ENCODE measurements at regions of chr5 and their contacts with region 1.

Region 1: GRCh38 chr5:8329773-8330172 is 460.8 kb downstream of the MTRR start:
- DNase-seq: no peak
- ATAC-seq: no peak
- H3K4me3 ChIP-seq: no peak overlapping the region
- H3K27ac ChIP-seq: no peak overlapping the region
- H3K4me1 ChIP-seq: no peaks in the 10 kb centered on the region
- H3K27me3 ChIP-seq: no peaks in the 10 kb centered on the region
- CTCF ChIP-seq: no peak

Region 2: DNA sequence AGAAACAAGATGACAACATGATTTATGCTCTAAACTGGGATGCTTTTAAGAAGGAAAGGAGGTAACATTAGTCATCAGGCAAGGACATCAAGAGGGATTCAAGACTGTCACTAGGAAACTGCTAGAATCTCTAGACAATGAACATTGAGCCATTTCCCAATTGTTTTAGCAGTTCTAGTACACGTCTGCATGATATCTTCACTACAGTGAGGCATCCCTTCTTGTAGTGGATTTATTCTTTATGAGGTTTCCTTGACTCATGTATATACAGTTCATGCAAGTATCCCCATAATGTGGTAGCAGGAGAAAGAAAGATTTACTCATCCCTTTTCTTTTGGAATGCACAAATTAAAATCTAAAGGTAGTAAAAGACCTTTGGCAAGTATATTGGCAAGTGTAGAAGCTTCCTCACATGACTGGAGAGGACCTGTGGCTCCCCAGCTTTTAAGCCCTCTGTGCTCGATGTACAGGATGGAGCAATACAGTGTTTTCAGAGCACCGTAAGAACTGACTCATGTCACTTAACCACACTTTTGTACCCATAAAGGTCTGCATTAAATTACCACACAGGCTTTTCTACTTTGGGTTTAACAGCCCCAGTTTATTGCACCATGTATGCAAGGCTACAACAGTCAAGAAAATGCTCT is 880.2 kb after region 1 on chr5:
- intact Hi-C with region 1: loop called in 1 of 2 experiments (anchors 5 kb)
- DNase-seq: no peak
- ATAC-seq: no peak
- H3K4me3 ChIP-seq: no peak overlapping the region
- H3K27ac ChIP-seq: no peak overlapping the region
- H3K4me1 ChIP-seq: no peaks in the 10 kb centered on the region
- H3K27me3 ChIP-seq: no peaks in the 10 kb centered on the region
- CTCF ChIP-seq: no peak

Measured in left lung (tissue), 14 donors.